Activated CD4-positive, alpha-beta T cell treated with anti-CD3 and anti-CD28 coated beads for 36 hours (primary cell): ENCODE measurements at regions of chr10 and their contacts with region 1.

Region 1: GRCh38 chr10:110210674-110211464 is 3.5 kb downstream of the MXI1 start:
- DNase-seq: peak; percentile 96
- ATAC-seq: peak; percentile 71
- H3K4me3 Mint-ChIP-seq: peak overlapping the region; percentile 86
- H3K27ac Mint-ChIP-seq: peak overlapping the region; percentile 96
- H3K4me1 Mint-ChIP-seq: peaks cover 53% of the 10 kb centered on the region
- H3K27me3 Mint-ChIP-seq: no peaks in the 10 kb centered on the region

Region 2: DNA sequence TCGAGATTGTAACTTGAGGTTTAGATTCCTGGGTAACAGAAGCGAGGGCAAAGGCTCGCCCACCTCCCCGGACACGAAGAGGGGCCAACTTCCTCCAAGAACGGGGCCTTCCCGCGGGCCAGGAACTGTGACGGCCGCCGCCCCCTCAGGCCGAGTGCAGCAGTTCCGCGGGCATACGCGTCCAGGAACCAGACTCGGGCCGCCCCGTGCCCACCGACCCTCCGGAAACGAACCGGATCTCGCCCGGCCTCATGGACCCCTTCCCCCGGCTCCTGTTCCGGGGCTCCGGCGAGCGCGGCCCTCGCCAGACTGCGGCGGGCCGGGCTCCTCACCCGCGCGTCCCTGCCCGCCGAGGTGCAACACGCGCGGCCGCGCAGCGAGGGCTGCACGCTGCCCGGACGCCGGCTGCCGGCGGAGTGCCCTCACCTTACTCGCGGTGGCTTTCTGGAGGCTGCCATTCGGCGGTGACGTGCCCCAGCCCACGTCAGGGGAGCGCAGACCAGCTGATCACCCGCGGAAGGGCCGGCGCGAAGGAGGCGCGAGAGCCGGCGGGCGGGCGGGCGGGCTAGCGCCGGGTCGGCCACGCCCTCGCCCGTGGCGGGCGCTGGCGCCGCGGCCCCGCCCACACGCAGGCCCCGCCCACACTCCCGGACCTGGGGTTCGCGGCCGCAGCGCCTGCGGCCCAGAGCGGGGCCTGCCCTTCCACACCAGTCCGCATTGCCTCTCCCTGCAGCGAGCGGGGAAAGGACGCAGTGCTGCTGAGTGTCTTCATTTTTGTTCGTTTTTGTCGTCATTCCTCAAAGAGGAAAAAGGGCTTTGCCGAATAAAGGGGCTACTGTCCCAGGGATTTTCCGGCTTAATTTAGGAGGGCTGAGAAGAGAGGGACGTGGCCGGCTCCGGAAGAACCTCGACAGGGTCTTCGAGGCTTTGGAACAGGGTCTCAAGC is 287.6 kb before region 1 on chr10 and contains the start of gene XPNPEP1:
- CTCF ChIA-PET with region 1: no interaction called
- POLR2A ChIA-PET with region 1: no interaction called
- intact Hi-C with region 1: loop called in 1 of 2 experiments (anchors 2 kb)
- DNase-seq: peak; percentile 90
- ATAC-seq: peak; percentile 90
- H3K4me3 Mint-ChIP-seq: peak within 1 kb of the TSS; percentile 94
- H3K27ac Mint-ChIP-seq: peak within 1 kb of the TSS; percentile 94
- H3K4me1 Mint-ChIP-seq: peaks cover 48% of the 10 kb centered on the region
- H3K27me3 Mint-ChIP-seq: no peaks in the 10 kb centered on the region
- total RNA-seq, gene XPNPEP1: 85.4 to 91.2 TPM

Region 3: DNA sequence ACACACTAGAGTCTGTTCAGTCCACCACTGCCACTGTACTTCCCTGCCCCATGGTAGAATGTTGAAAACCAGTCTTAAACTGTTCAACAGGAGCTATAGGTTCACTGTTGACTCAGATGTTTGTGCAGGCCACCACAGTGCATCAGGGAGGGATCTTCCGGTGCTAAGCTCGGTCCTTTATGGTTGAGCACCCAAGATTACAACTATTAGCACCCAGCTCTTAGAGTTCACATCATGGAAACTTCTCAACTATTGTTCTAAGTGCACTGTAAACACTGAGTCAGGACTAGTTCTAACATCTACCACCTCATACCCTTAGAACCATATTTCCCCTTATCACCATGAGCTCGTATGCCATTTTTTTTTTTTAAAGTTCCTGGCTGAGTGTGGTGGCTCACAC is 100.5 kb before region 1 on chr10:
- CTCF ChIA-PET with region 1: no interaction called
- POLR2A ChIA-PET with region 1: no interaction called
- intact Hi-C with region 1: no loop called
- DNase-seq: peak; percentile 31
- ATAC-seq: peak; percentile 81
- H3K4me3 Mint-ChIP-seq: no peak overlapping the region
- H3K27ac Mint-ChIP-seq: peak overlapping the region; percentile 53
- H3K4me1 Mint-ChIP-seq: peaks cover 31% of the 10 kb centered on the region
- H3K27me3 Mint-ChIP-seq: no peaks in the 10 kb centered on the region

Region 4: DNA sequence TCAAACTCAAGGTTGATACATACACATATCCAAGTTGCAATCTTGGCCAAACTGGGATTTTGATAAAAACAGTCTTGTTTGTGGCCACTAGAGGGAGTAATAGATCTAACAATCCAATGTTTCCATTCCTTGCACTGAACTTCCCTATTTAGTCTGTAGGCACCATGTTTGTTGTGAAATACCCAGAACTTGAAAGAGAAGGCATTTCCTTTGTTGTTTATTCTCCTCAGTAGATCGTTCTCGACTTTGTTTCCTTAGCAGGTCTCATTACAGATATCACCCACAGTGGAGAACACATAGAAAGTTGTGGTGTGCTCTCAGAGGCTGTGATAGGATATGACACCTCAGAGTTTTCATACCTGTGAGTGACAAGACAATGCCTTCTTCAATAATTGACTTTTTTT is 73.7 kb before region 1 on chr10:
- CTCF ChIA-PET with region 1: interaction called, 19 read pairs
- POLR2A ChIA-PET with region 1: interaction called, 4 read pairs
- intact Hi-C with region 1: loop called (anchors 1 kb)
- DNase-seq: no peak
- ATAC-seq: peak; percentile 78
- H3K4me3 Mint-ChIP-seq: no peak overlapping the region
- H3K27ac Mint-ChIP-seq: peak overlapping the region; percentile 7
- H3K4me1 Mint-ChIP-seq: peaks cover 34% of the 10 kb centered on the region
- H3K27me3 Mint-ChIP-seq: no peaks in the 10 kb centered on the region

Region 5: DNA sequence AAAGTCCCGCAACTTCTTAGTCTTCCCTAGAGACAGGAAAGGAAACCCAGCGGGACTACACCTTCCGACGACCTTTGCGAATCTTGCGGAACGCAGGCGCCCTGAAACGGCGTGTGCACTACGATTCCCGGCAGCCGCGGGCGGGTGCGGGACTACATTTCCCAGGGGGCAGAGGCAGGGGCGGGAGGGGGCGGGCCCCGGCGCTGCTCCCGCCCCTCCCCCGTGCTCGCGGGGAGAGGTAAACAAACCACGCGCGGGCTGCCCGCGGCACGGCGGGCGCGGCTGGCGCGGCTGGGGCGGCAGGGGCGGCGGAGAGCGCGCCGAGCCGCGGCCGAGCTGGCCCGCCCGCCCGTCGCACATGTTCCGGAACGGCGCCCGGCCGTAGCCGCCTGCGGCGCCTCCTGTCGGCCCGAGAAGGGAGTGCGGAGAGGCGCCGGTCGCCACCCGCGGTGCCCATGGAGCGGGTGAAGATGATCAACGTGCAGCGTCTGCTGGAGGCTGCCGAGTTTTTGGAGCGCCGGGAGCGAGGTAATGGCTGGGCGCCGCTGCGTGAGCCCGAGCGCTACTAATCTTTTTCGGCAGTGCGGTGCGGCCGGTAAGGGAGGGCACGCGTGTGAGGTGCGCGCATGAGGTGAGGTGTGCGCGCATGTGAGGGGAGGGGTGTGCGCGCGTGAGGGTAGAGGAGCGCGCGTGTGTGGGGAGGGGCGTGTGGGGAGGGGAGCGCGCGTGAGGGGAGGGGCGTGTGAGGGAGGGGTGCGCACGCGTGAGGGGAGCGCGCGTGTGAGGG is 15.1 kb after region 1 on chr10:
- CTCF ChIA-PET with region 1: interaction called, 154 read pairs
- POLR2A ChIA-PET with region 1: interaction called, 65 read pairs
- intact Hi-C with region 1: loop called (anchors 1 kb)
- DNase-seq: peak; percentile 94
- ATAC-seq: peak; percentile 48
- H3K4me3 Mint-ChIP-seq: peak overlapping the region; percentile 95
- H3K27ac Mint-ChIP-seq: peak overlapping the region; percentile 95
- H3K4me1 Mint-ChIP-seq: peaks cover 44% of the 10 kb centered on the region
- H3K27me3 Mint-ChIP-seq: no peaks in the 10 kb centered on the region

Region 6: GRCh38 chr10:110279407-110279986 is 68.6 kb after region 1 on chr10:
- CTCF ChIA-PET with region 1: interaction called, 48 read pairs
- POLR2A ChIA-PET with region 1: no interaction called
- intact Hi-C with region 1: loop called (anchors 1 kb)
- DNase-seq: peak; percentile 60
- ATAC-seq: peak; percentile 51
- H3K4me3 Mint-ChIP-seq: no peak overlapping the region
- H3K27ac Mint-ChIP-seq: no peak overlapping the region
- H3K4me1 Mint-ChIP-seq: peaks cover 23% of the 10 kb centered on the region
- H3K27me3 Mint-ChIP-seq: no peaks in the 10 kb centered on the region

Region 7: GRCh38 chr10:110414563-110415309 is 203.9 kb after region 1 on chr10:
- CTCF ChIA-PET with region 1: interaction called, 4 read pairs
- POLR2A ChIA-PET with region 1: no interaction called
- intact Hi-C with region 1: loop called in 1 of 2 experiments (anchors 5 kb)
- DNase-seq: peak; percentile 93
- ATAC-seq: peak; percentile 94
- H3K4me3 Mint-ChIP-seq: peak overlapping the region; percentile 34
- H3K27ac Mint-ChIP-seq: peak overlapping the region; percentile 91
- H3K4me1 Mint-ChIP-seq: peaks cover 72% of the 10 kb centered on the region
- H3K27me3 Mint-ChIP-seq: no peaks in the 10 kb centered on the region

Region 8: GRCh38 chr10:110871298-110872084 is 660.6 kb after region 1 on chr10 and contains the start of gene PDCD4:
- CTCF ChIA-PET with region 1: no interaction called
- POLR2A ChIA-PET with region 1: no interaction called
- intact Hi-C with region 1: loop called in 1 of 2 experiments (anchors 5 kb)
- DNase-seq: peak; percentile 97
- ATAC-seq: peak; percentile 85
- H3K4me3 Mint-ChIP-seq: peak within 1 kb of the TSS; percentile 87
- H3K27ac Mint-ChIP-seq: peak within 1 kb of the TSS; percentile 95
- H3K4me1 Mint-ChIP-seq: peaks cover 63% of the 10 kb centered on the region
- H3K27me3 Mint-ChIP-seq: no peaks in the 10 kb centered on the region
- total RNA-seq, gene PDCD4: 69.8 to 125 TPM